Cardiac septum (tissue), 1 donor: ENCODE measurements at regions of chr1 and their contacts with region 1.

Region 1: DNA sequence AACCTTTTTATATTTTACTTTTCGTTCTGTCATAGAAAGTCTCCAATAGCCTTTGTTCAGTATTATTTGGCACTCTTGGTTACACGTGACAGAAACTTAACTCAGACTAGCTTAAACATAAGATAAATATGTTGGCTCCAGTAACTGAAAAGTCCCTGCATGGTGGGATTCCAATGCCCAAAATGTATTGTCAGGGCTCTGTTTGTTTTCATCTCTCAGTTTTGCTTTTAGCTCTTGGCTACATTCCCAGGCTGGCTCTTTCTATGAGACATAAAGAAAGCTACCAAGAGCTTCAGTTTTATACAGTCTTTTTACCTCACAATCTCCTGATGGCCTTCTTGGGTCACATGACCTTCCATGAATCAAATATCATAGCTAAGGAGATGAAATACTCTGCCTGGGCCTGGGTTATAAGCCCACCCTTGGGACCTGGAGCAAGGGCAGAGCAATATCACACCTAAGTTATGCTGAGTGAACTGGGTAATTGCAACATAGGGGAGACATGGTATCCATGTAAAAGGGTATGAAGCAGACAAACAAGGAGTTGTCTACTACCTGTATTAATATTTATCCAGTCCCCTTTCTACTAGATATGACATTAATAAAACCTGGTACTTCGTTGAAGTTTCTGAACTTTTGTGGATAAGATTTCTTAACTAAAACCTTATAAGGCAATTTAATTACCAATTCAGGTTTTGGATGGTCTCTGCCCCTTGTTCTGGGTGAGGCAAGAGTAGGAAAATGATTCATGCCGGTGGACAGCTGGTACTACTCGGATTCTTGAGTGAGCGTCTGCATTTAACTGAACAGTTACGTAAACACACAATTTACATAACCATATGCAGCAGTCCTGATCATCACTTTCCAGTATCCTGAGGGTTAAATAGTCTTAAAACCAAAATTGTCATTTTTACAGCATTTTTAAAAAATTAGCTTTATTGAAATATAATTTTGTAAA is 442.3 kb downstream of the GPATCH2 start:
- DNase-seq: no peak

Region 2: GRCh38 chr1:216888731-216889130 is 299.8 kb before region 1 on chr1:
- intact Hi-C with region 1: no loop called
- DNase-seq: no peak

Region 3: GRCh38 chr1:217115404-217116380 is 72.9 kb before region 1 on chr1:
- intact Hi-C with region 1: no loop called
- DNase-seq: no peak

Region 4: GRCh38 chr1:217140041-217140901 is 48.3 kb before region 1 on chr1:
- intact Hi-C with region 1: loop called (anchors 1 kb)
- DNase-seq: no peak